ENCODE measurements at regions of chr5 and their contacts with region 1.

Region 1: DNA sequence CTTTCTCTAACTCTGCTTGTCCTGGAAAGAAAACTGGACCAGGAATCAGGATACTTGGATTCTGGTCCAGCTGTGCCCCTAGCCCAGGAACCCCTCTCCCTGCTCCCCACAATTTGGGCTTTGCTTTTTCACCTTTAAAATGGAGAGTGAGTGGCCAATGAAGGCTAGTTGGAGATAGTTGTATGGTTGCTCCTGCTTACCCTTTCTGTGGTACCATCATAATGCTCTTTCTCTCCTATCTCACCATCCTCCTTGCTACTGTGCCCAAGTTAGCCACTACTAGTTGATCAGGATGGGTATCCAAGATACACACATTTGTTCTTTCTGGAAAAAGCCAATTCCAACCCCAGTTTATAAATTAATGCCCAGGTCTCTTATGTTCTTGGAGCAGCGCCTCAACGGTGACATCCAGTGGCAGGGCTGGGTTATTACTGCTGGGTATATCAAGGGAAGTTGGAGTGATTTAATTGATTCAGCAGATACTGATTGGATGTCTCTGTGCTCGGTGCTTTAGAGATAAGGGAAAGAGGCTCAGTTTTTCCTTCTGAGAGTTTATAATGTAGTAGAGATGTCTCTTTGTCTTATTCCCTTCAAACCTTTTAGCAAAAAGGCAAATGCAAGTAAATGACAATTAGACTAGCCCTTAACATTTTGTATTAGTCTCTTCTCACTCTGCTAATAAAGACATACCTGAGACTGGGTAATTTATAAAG is 38.6 kb downstream of the FAXDC2 start:
- DNase-seq: peak; percentile 35 to 65 (median 51)
- H3K4me3 ChIP-seq: no peak overlapping the region
- H3K27ac ChIP-seq: no peak overlapping the region
- H3K4me1 ChIP-seq: no peaks in the 10 kb centered on the region
- H3K27me3 ChIP-seq: no peaks in the 10 kb centered on the region
- CTCF ChIP-seq: peak; percentile 49 to 76 (median 57)
- EP300 ChIP-seq: no peak
- POLR2A ChIP-seq: no peak

Region 2: DNA sequence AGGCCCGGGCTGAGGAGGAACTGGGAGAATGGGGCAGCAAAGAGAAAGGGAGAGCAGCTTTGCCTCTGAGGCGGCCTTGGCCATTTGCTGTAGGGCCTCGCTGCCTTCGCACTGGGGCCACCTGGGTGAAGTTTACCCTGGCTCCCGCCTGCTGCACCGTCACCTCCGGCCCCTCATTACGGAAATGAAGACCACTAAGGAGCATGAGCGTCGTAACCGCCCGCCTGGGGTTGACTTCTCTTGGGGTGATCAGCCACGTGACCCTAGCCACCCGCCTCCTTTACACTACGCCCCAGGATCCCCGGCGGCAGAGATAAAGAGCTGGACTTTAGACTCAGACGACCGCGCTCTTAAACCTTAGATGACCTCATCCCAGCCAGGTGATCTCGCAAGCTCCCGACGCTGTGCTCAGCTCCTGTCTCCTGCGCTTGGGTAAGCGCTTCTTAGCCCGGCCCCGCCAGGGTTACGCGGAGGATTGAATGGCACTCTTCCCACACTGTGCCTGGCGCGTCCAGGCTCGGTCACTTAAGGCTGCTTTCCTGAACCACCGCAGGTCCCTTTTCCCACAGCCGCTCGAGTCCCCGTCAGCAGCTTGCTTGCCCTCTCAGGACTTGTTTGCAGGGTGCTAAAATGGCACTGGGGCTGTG is 164.6 kb before region 1 on chr5:
- intact Hi-C with region 1: loop called in 3 of 4 experiments (anchors 2 to 5 kb)
- DNase-seq: peak in 4 of 5 donors; percentile 15 to 47 (median 28)
- H3K4me3 ChIP-seq: peak overlapping the region; percentile 22
- H3K27ac ChIP-seq: no peak overlapping the region
- H3K4me1 ChIP-seq: peaks cover 4% of the 10 kb centered on the region
- H3K27me3 ChIP-seq: no peaks in the 10 kb centered on the region
- CTCF ChIP-seq: no peak
- EP300 ChIP-seq: no peak
- POLR2A ChIP-seq: no peak

Region 3: GRCh38 chr5:154654486-154655371 is 157.1 kb before region 1 on chr5:
- intact Hi-C with region 1: loop called in 3 of 4 experiments (anchors 2 to 5 kb)
- DNase-seq: no peak
- H3K4me3 ChIP-seq: peak overlapping the region; percentile 20
- H3K27ac ChIP-seq: peak overlapping the region in 1 of 2 donors; percentile 50
- H3K4me1 ChIP-seq: peaks cover 8% of the 10 kb centered on the region
- H3K27me3 ChIP-seq: no peaks in the 10 kb centered on the region
- CTCF ChIP-seq: no peak
- EP300 ChIP-seq: no peak
- POLR2A ChIP-seq: no peak

Region 4: GRCh38 chr5:154663424-154663823 is 148.4 kb before region 1 on chr5:
- intact Hi-C with region 1: loop called in 1 of 4 experiments (anchors 10 kb)
- DNase-seq: no peak
- H3K4me3 ChIP-seq: no peak overlapping the region
- H3K27ac ChIP-seq: no peak overlapping the region
- H3K4me1 ChIP-seq: no peaks in the 10 kb centered on the region
- H3K27me3 ChIP-seq: no peaks in the 10 kb centered on the region
- CTCF ChIP-seq: no peak
- EP300 ChIP-seq: no peak
- POLR2A ChIP-seq: no peak

Region 5: GRCh38 chr5:154840435-154841272 is 28.8 kb after region 1 on chr5:
- intact Hi-C with region 1: no loop called
- DNase-seq: no peak
- H3K4me3 ChIP-seq: no peak overlapping the region
- H3K27ac ChIP-seq: no peak overlapping the region
- H3K4me1 ChIP-seq: peaks cover 5% of the 10 kb centered on the region
- H3K27me3 ChIP-seq: no peaks in the 10 kb centered on the region
- CTCF ChIP-seq: no peak
- EP300 ChIP-seq: no peak
- POLR2A ChIP-seq: no peak

Region 6: DNA sequence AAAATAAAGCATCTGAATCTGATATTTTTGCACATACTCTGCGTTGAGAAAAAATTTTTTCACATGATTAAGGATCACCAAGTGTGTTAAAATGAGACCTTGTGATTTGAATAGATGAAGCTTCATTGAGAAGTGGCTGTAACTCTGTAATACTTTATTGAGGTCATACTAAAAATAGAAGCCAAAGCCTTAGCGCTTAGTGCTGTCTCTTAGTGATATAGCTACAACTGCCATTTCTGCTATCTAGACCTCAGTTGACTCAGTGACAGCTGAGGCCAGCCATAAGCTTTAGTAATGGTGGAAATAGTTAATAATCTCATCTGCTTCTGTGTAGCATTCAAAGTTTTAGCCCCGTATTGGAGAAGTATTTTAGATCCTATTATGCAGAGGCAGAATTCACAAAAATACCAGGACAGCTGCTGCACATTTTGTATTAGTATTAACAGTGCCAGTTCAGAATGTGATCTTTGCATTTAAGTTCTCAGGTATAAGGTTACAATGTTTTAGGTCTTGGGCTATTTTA is 1407.7 kb after region 1 on chr5:
- intact Hi-C with region 1: no loop called
- DNase-seq: no peak
- H3K4me3 ChIP-seq: no peak overlapping the region
- H3K27ac ChIP-seq: no peak overlapping the region
- H3K4me1 ChIP-seq: no peaks in the 10 kb centered on the region
- H3K27me3 ChIP-seq: no peaks in the 10 kb centered on the region
- CTCF ChIP-seq: no peak
- EP300 ChIP-seq: no peak
- POLR2A ChIP-seq: no peak

Measured in ovary (tissue), 10 donors.